CD8-positive, alpha-beta T cell (primary cell): ENCODE measurements at regions of chr6 and their contacts with region 1.

Region 1: GRCh38 chr6:45327956-45328522 is at the start of gene RUNX2:
- DNase-seq: peak in 3 of 9 experiments; percentile 20 to 68 (median 33)
- ATAC-seq: peak; percentile 80
- H3K4me3 ChIP-seq: peak within 1 kb of the TSS; percentile 44 to 57
- H3K4me3 Mint-ChIP-seq: peak within 1 kb of the TSS; percentile 94
- H3K27ac ChIP-seq: peak within 1 kb of the TSS; percentile 51 to 57
- H3K27ac Mint-ChIP-seq: peak within 1 kb of the TSS; percentile 94
- H3K4me1 ChIP-seq: peaks cover 49% of the 10 kb centered on the region
- H3K4me1 Mint-ChIP-seq: peaks cover 85% of the 10 kb centered on the region
- H3K27me3 ChIP-seq: no peaks in the 10 kb centered on the region
- H3K27me3 Mint-ChIP-seq: no peaks in the 10 kb centered on the region
- CTCF ChIP-seq: no peak
- total RNA-seq, gene RUNX2: 11.7 to 13.8 TPM

Region 2: GRCh38 chr6:45310118-45310788 is 17.8 kb before region 1 on chr6:
- CTCF ChIA-PET with region 1: interaction called, 4 read pairs
- POLR2A ChIA-PET with region 1: interaction called, 6 read pairs
- intact Hi-C with region 1: loop called (anchors 2 kb)
- DNase-seq: peak; percentile 2 to 80 (median 51)
- ATAC-seq: peak; percentile 87
- H3K4me3 ChIP-seq: peak overlapping the region; percentile 14 to 28
- H3K4me3 Mint-ChIP-seq: peak overlapping the region; percentile 64
- H3K27ac ChIP-seq: peak overlapping the region; percentile 29 to 45
- H3K27ac Mint-ChIP-seq: peak overlapping the region; percentile 95
- H3K4me1 ChIP-seq: peaks cover 35% of the 10 kb centered on the region
- H3K4me1 Mint-ChIP-seq: peaks cover 65% of the 10 kb centered on the region
- H3K27me3 ChIP-seq: no peaks in the 10 kb centered on the region
- H3K27me3 Mint-ChIP-seq: no peaks in the 10 kb centered on the region
- CTCF ChIP-seq: no peak

Region 3: GRCh38 chr6:45350186-45350710 is 22.2 kb after region 1 on chr6:
- CTCF ChIA-PET with region 1: no interaction called
- POLR2A ChIA-PET with region 1: interaction called, 4 read pairs
- intact Hi-C with region 1: loop called in 1 of 2 experiments (anchors 2 kb)
- DNase-seq: no peak
- ATAC-seq: no peak
- H3K4me3 ChIP-seq: no peak overlapping the region
- H3K4me3 Mint-ChIP-seq: no peak overlapping the region
- H3K27ac ChIP-seq: no peak overlapping the region
- H3K27ac Mint-ChIP-seq: no peak overlapping the region
- H3K4me1 ChIP-seq: peaks cover 15% of the 10 kb centered on the region
- H3K4me1 Mint-ChIP-seq: peaks cover 22% of the 10 kb centered on the region
- H3K27me3 ChIP-seq: no peaks in the 10 kb centered on the region
- H3K27me3 Mint-ChIP-seq: no peaks in the 10 kb centered on the region
- CTCF ChIP-seq: no peak

Region 4: GRCh38 chr6:45377554-45378333 is 49.7 kb after region 1 on chr6 and contains the start of gene SUPT3H:
- CTCF ChIA-PET with region 1: interaction called, 7 read pairs
- POLR2A ChIA-PET with region 1: interaction called, 10 read pairs
- intact Hi-C with region 1: loop called (anchors 2 to 5 kb)
- DNase-seq: peak; percentile 79 to 98 (median 91)
- ATAC-seq: peak; percentile 79
- H3K4me3 ChIP-seq: peak within 1 kb of the TSS; percentile 73 to 90
- H3K4me3 Mint-ChIP-seq: peak within 1 kb of the TSS; percentile 96
- H3K27ac ChIP-seq: peak within 1 kb of the TSS; percentile 83 to 95
- H3K27ac Mint-ChIP-seq: peak within 1 kb of the TSS; percentile 99
- H3K4me1 ChIP-seq: peaks cover 8% of the 10 kb centered on the region
- H3K4me1 Mint-ChIP-seq: peaks cover 29% of the 10 kb centered on the region
- H3K27me3 ChIP-seq: no peaks in the 10 kb centered on the region
- H3K27me3 Mint-ChIP-seq: no peaks in the 10 kb centered on the region
- CTCF ChIP-seq: no peak
- total RNA-seq, gene SUPT3H: 9.4 to 10.7 TPM